ENCODE measurements at regions of chr3 and their contacts with region 1.

Region 1: GRCh38 chr3:39378088-39378487 is 5.1 kb upstream of the SLC25A38 start:
- DNase-seq: peak; percentile 56
- H3K4me3 Mint-ChIP-seq: no peak overlapping the region
- H3K27ac Mint-ChIP-seq: no peak overlapping the region
- H3K4me1 Mint-ChIP-seq: peaks cover 21% of the 10 kb centered on the region
- H3K27me3 Mint-ChIP-seq: no peaks in the 10 kb centered on the region

Region 2: DNA sequence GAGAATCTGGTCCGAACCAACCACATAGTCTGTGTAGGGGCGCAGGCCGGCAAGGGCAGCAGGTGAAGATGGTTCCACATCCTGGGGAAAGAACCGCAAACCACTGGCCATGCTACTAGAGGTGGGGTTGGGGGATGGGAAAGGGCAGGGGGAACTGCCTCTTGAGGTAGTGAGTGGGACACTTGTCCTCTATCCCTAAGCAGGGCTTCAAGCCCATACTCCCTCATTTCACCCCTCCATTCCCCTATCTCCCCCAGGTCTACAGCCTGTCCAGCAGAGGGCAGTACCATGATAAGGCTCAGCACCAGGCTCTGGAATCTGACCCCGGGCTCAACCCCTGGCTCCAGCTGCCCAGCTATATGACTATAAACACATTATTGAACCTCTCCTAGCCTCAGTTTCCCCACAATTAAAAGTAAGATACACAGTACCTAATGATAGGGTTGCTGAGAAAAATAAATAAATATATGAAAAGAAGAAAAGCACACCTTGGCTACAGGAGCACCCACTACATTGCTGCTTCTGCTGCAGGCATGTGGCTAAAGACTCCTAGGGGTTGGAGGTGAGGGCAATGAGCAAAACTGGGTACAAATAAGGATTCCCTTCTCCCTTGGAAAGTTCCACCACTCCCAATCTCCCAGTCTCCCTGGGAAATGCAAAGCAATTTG is 276.9 kb before region 1 on chr3:
- intact Hi-C with region 1: loop called (anchors 2 kb)
- DNase-seq: peak; percentile 27
- H3K4me3 Mint-ChIP-seq: no peak overlapping the region
- H3K27ac Mint-ChIP-seq: no peak overlapping the region
- H3K4me1 Mint-ChIP-seq: peaks cover 42% of the 10 kb centered on the region
- H3K27me3 Mint-ChIP-seq: peaks cover 2% of the 10 kb centered on the region

Region 3: GRCh38 chr3:39121621-39122020 is 256.5 kb before region 1 on chr3:
- intact Hi-C with region 1: no loop called
- DNase-seq: no peak
- H3K4me3 Mint-ChIP-seq: no peak overlapping the region
- H3K27ac Mint-ChIP-seq: no peak overlapping the region
- H3K4me1 Mint-ChIP-seq: peaks cover 3% of the 10 kb centered on the region
- H3K27me3 Mint-ChIP-seq: peaks cover 14% of the 10 kb centered on the region

Region 4: GRCh38 chr3:39189959-39190269 is 188.2 kb before region 1 on chr3:
- intact Hi-C with region 1: loop called (anchors 1 kb)
- DNase-seq: peak; percentile 46
- H3K4me3 Mint-ChIP-seq: no peak overlapping the region
- H3K27ac Mint-ChIP-seq: peak overlapping the region; percentile 61
- H3K4me1 Mint-ChIP-seq: peaks cover 22% of the 10 kb centered on the region
- H3K27me3 Mint-ChIP-seq: no peaks in the 10 kb centered on the region

Region 5: GRCh38 chr3:39208463-39209055 is 169.5 kb before region 1 on chr3:
- intact Hi-C with region 1: loop called (anchors 1 kb)
- DNase-seq: no peak
- H3K4me3 Mint-ChIP-seq: no peak overlapping the region
- H3K27ac Mint-ChIP-seq: no peak overlapping the region
- H3K4me1 Mint-ChIP-seq: peaks cover 14% of the 10 kb centered on the region
- H3K27me3 Mint-ChIP-seq: peaks cover 26% of the 10 kb centered on the region

Region 6: GRCh38 chr3:39346785-39347585 is 31.1 kb before region 1 on chr3:
- intact Hi-C with region 1: loop called (anchors 2 kb)
- DNase-seq: no peak
- H3K4me3 Mint-ChIP-seq: peak overlapping the region; percentile 15
- H3K27ac Mint-ChIP-seq: peak overlapping the region; percentile 4
- H3K4me1 Mint-ChIP-seq: peaks cover 62% of the 10 kb centered on the region
- H3K27me3 Mint-ChIP-seq: no peaks in the 10 kb centered on the region